ENCODE measurements at regions of chr7 and their contacts with region 1.

Region 1: GRCh38 chr7:66075590-66076461 is at the start of gene ASL:
- DNase-seq: peak; percentile 65 to 93 (median 84)
- ATAC-seq: peak; percentile 98
- H3K4me3 ChIP-seq: peak within 1 kb of the TSS; percentile 66 to 96
- H3K4me3 Mint-ChIP-seq: peak within 1 kb of the TSS; percentile 87
- H3K27ac ChIP-seq: peak within 1 kb of the TSS; percentile 55 to 67
- H3K27ac Mint-ChIP-seq: no peak within 1 kb of the TSS
- H3K4me1 ChIP-seq: peaks cover 11% of the 10 kb centered on the region
- H3K4me1 Mint-ChIP-seq: peaks cover 14% of the 10 kb centered on the region
- H3K27me3 ChIP-seq: no peaks in the 10 kb centered on the region
- H3K27me3 Mint-ChIP-seq: no peaks in the 10 kb centered on the region
- CTCF ChIP-seq: no peak
- total RNA-seq, gene ASL: 6.8 to 7.5 TPM

Region 2: DNA sequence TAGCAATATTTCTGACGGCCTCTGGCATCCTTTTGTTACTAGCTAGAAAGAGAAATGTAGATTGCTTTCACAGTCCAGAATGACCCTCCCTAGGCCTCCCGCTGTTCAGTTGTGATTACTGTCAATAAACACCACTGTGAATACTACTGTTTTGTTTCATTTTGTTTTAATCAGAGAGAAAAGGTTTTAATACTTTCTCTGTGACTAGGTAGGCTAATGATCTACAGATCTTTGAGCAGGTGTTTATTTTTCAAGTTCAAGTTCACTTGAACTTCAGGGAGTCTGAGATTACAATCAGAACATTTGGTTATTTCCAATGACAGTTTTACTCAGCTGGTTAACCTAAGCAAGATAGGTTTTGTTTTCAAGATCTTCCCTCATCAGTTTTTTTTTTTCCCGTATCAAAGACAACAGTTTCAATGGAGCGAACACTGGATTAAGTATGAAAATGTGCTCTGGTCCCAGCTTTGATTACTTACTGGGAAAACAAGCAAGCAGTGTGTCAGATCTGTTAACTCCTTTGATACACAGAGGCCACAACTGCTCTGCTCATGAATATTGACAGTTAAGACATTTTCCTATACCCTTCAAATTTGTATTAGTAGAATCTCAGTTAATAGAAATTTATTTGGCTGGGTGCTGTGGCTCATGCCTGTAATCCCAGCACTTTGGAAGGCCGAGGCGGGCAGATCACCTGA is 168.2 kb before region 1 on chr7:
- CTCF ChIA-PET with region 1: no interaction called
- POLR2A ChIA-PET with region 1: no interaction called
- intact Hi-C with region 1: no loop called
- DNase-seq: no peak
- ATAC-seq: no peak
- H3K4me3 ChIP-seq: no peak overlapping the region
- H3K4me3 Mint-ChIP-seq: no peak overlapping the region
- H3K27ac ChIP-seq: no peak overlapping the region
- H3K27ac Mint-ChIP-seq: no peak overlapping the region
- H3K4me1 ChIP-seq: no peaks in the 10 kb centered on the region
- H3K4me1 Mint-ChIP-seq: peaks cover 3% of the 10 kb centered on the region
- H3K27me3 ChIP-seq: no peaks in the 10 kb centered on the region
- H3K27me3 Mint-ChIP-seq: no peaks in the 10 kb centered on the region
- CTCF ChIP-seq: no peak

Region 3: DNA sequence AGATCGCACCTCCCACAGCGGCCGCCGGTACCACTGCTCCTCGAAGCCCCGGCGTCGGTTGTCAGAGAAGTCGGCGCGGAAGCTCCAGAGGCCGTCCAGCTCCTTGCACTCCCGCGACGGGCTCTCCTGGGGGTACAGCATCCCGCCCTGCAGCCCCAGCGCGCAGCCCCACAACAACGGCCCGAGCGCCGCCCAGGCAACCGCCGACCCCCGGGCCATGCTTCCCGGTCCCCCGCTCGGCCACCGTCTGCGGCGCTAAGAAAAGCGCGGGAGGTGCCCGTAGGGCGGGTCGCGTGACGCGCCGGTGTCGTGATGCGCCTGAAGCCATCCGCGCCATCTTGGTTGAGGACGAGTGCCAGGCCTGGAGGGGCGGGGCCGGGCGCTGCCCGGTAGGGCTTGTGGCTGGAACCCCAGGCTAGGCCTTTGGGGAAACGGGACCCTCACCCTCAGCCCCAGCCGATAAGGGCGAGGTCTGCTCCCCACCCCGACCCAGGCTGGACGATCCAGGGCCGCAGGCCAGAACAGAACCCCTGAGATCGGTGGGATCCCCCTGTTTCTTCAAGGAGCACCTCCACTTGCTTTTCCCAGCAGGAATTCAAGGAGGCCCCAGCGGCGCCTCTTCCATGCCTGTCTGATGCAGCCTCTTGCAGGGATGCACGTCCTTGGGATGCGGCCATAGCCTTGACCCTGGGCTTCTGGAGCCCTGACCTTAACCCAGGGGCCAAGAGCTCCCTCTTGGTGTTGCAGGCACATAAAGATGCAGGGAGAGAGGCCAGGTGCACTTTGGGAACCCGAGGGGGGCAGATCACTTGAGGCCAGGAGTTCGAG is 93.6 kb before region 1 on chr7 and contains the start of gene GUSB:
- CTCF ChIA-PET with region 1: no interaction called
- POLR2A ChIA-PET with region 1: no interaction called
- intact Hi-C with region 1: loop called (anchors 2 kb)
- DNase-seq: peak; percentile 80 to 93 (median 90)
- ATAC-seq: peak; percentile 87
- H3K4me3 ChIP-seq: peak within 1 kb of the TSS; percentile 83 to 90
- H3K4me3 Mint-ChIP-seq: peak within 1 kb of the TSS; percentile 85
- H3K27ac ChIP-seq: peak within 1 kb of the TSS; percentile 69 to 73
- H3K27ac Mint-ChIP-seq: peak within 1 kb of the TSS; percentile 88
- H3K4me1 ChIP-seq: peaks cover 18% of the 10 kb centered on the region
- H3K4me1 Mint-ChIP-seq: peaks cover 14% of the 10 kb centered on the region
- H3K27me3 ChIP-seq: no peaks in the 10 kb centered on the region
- H3K27me3 Mint-ChIP-seq: no peaks in the 10 kb centered on the region
- CTCF ChIP-seq: no peak
- total RNA-seq, gene GUSB: 37.0 to 41.8 TPM